ENCODE measurements at regions of chr2 and their contacts with region 1.

Region 1: GRCh38 chr2:109384308-109385241 is 229.2 kb downstream of the SEPTIN10 start:
- DNase-seq: no peak
- H3K4me3 ChIP-seq: no peak overlapping the region
- H3K27ac ChIP-seq: no peak overlapping the region
- H3K4me1 ChIP-seq: peaks cover 19% of the 10 kb centered on the region
- H3K27me3 ChIP-seq: no peaks in the 10 kb centered on the region
- CTCF ChIP-seq: no peak
- POLR2A ChIP-seq: no peak

Region 2: DNA sequence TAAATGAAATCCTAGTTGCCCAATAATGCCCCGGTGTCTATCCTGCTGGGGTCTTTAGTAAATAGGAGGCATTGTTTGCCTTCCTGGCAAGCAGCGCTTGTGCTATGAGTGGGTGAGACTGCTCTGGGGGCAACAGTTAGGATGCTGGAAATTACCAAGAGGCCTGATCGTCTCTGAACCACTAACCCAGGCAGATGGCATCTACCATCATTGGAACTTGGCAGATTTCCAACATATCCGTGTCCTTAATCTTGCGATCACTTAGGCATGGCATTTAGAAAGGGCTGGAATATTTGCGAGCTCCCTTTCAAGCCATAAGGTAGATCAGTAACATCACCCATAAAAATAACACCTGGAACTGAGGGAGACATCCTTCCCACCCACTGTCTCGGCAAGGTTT is 274.4 kb before region 1 on chr2:
- intact Hi-C with region 1: no loop called
- DNase-seq: no peak
- H3K4me3 ChIP-seq: no peak overlapping the region
- H3K27ac ChIP-seq: no peak overlapping the region
- H3K4me1 ChIP-seq: no peaks in the 10 kb centered on the region
- H3K27me3 ChIP-seq: no peaks in the 10 kb centered on the region
- CTCF ChIP-seq: no peak
- POLR2A ChIP-seq: no peak

Region 3: DNA sequence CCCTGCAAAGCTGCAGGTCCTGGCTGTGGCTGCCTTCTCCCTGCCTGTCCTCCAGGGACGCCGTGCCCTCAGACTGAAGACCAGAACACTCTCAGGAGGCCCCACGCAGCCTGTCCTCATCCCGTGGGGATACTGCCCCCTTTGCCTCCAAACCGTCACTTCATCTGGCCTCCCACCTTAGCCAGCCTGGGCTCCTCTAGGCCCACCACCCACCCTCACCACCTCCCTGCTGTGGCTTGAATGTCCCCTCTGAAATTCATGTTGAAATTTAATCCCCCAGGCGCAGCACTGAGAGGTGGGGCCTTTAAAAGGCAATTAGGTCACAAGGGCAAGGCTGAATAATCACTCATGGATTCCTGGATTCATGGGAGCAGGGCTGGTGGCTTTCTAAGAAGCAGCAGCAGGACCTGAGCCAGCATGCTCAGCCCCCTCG is 31.0 kb after region 1 on chr2:
- intact Hi-C with region 1: loop called (anchors 1 kb)
- DNase-seq: no peak
- H3K4me3 ChIP-seq: no peak overlapping the region
- H3K27ac ChIP-seq: no peak overlapping the region
- H3K4me1 ChIP-seq: peaks cover 12% of the 10 kb centered on the region
- H3K27me3 ChIP-seq: no peaks in the 10 kb centered on the region
- CTCF ChIP-seq: no peak
- POLR2A ChIP-seq: no peak